Breast epithelium (tissue), 4 donors: ENCODE measurements at regions of chr10 and their contacts with region 1.

Region 1: GRCh38 chr10:65779985-65780384 is 1145.9 kb upstream of the LRRTM3 start:
- DNase-seq: no peak
- H3K4me3 ChIP-seq: no peak overlapping the region
- H3K27ac ChIP-seq: no peak overlapping the region
- H3K4me1 ChIP-seq: no peaks in the 10 kb centered on the region
- H3K27me3 ChIP-seq: no peaks in the 10 kb centered on the region
- CTCF ChIP-seq: no peak
- POLR2A ChIP-seq: no peak

Region 2: GRCh38 chr10:65723525-65723924 is 56.5 kb before region 1 on chr10:
- intact Hi-C with region 1: no loop called
- DNase-seq: no peak
- H3K4me3 ChIP-seq: no peak overlapping the region
- H3K27ac ChIP-seq: no peak overlapping the region
- H3K4me1 ChIP-seq: no peaks in the 10 kb centered on the region
- H3K27me3 ChIP-seq: no peaks in the 10 kb centered on the region
- CTCF ChIP-seq: no peak
- POLR2A ChIP-seq: no peak

Region 3: DNA sequence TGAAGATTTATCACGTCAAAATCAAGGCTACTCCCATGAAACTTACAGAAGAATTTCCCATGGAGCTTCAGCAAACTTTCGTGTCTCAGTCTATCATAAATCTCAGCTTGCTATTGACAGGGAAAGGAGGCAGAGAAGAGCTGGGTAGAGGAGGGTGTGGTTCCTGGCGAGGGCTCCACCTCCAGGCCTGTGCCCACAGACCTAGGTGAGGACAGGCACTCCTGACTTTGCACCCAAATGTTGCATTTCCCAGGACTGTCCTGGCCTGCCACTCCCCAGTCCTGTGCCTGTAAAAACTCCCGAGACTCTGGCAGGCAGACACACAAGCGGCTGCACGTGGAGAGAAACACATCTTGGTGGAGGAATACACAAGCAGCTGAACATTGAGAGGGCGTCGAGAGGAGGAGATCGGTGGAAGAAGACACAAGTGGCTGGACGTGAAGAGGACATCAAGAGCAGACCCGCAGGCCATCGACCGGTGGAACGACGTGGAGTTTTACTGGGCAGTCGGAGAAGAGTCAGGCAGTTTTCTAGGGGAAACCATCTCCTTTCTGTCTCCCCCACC is 1770.9 kb after region 1 on chr10:
- intact Hi-C with region 1: loop called (anchors 10 kb)
- DNase-seq: no peak
- H3K4me3 ChIP-seq: no peak overlapping the region
- H3K27ac ChIP-seq: no peak overlapping the region
- H3K4me1 ChIP-seq: no peaks in the 10 kb centered on the region
- H3K27me3 ChIP-seq: no peaks in the 10 kb centered on the region
- CTCF ChIP-seq: no peak
- POLR2A ChIP-seq: no peak